WTC11 (cell line): ENCODE measurements at regions of chr6 and their contacts with region 1.

Region 1: GRCh38 chr6:137475103-137475502 is 19.1 kb downstream of the OLIG3 start:
- DNase-seq: no peak
- ATAC-seq: peak; percentile 43; the same call in 1 of the 2 replicates
- H3K4me3 Mint-ChIP-seq: no peak overlapping the region
- H3K27ac Mint-ChIP-seq: no peak overlapping the region
- H3K4me1 Mint-ChIP-seq: peaks cover 19% of the 10 kb centered on the region
- H3K27me3 Mint-ChIP-seq: no peaks in the 10 kb centered on the region
- CTCF ChIP-seq: 0 out of 2 replicates have a peak, but pooled peaks have one; percentile 37

Region 2: DNA sequence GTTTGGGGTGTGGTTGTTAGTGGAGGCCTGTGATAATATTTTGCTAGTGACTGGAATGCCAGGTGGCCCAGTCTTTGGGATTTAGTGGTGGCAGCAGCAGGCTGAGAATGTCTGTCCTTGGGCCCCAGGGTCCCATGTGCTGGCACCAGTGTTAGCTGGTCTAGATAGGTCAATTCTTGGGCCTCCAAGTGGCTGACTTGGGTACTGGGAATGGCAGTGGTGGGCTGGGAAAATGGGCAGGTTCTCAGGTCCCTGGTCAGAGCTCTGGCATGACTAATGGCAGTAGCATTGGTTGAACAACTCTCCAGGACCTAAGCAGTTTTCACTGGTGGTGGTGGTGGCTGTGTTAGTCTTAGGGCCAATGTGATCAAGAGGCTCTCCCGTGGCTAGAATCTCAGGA is 31.2 kb before region 1 on chr6:
- CTCF ChIA-PET with region 1: no interaction called
- POLR2A ChIA-PET with region 1: no interaction called
- DNase-seq: peak; percentile 13
- ATAC-seq: peak; percentile 85
- H3K4me3 Mint-ChIP-seq: no peak overlapping the region
- H3K27ac Mint-ChIP-seq: no peak overlapping the region
- H3K4me1 Mint-ChIP-seq: no peaks in the 10 kb centered on the region
- H3K27me3 Mint-ChIP-seq: no peaks in the 10 kb centered on the region; the same call in 1 of the 2 replicates
- CTCF ChIP-seq: no peak

Region 3: DNA sequence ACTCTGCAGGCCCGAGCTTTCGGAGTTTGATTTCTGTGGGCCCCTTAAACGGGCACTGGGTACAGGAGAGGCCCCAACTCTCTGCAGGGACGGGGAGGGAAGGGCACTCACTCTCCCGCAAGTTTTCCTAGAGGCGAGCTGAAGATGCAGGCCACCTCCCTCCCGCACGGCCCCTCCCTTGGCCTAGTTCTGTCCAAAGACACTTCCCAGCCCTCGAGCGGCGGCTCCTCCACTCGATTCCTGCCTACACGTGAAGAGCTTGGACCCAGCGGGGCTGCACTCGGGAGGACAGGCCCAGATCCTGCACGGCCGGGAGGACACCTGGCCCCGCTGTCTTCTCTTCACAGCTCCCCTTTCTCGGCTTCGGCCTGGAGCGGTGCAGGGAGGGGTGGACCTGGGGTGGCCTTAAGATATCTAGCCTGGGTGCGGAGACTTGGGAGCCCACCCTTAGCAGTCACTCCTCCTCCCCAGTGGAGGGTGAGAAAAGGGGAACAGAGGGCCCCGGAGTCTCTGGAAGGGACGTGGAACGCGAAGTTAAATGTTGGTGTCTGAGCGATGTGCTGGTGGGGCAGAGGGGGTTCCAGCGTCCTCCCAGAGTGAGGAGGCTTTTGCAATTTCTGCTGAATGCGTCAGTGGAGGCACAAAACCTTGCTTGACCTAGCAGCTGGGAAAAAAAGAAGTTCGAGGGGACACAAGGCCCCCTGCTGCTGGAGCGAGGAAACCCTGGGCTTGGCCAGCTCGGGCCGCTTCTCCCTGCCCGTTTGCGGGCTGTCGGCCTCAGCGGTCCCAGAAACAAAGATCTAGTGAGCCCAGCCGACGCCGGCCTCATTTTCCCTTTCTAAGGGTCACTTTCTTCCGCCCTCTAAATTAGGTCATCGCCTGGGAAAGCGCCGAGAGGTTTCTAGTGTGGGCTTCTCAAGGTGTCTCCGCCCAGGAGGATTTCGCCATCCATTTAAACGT is 14.2 kb after region 1 on chr6:
- CTCF ChIA-PET with region 1: interaction called, 10 read pairs
- POLR2A ChIA-PET with region 1: no interaction called
- DNase-seq: peak; percentile 75
- ATAC-seq: peak; percentile 48
- H3K4me3 Mint-ChIP-seq: peak overlapping the region; percentile 84
- H3K27ac Mint-ChIP-seq: no peak overlapping the region
- H3K4me1 Mint-ChIP-seq: peaks cover 68% of the 10 kb centered on the region
- H3K27me3 Mint-ChIP-seq: peaks cover 96% of the 10 kb centered on the region
- CTCF ChIP-seq: no peak